Posterior vena cava (tissue), 2 donors: ENCODE measurements at regions of chr2 and their contacts with region 1.

Region 1: DNA sequence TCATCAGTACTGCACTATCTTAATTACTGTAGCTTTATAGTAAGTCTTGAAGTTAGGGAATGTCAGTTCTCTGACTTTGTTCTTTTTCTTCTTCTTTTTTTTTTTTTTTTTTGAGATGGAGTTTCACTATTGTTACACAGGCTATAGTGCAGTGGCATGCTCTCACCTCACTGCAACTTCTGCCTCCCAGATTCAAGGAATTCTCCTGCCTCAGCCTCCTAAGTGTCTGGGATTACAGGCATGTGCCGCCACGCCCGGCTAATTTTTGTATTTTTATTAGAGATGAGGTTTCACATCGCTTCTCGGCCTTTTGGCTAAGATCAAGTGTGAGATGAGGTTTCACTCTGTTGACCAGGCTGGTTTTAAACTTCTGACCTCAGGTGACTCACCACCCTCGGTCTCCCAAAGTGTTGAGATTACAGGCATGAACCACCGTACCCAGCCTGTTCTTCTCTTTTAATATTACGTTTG is 41.9 kb upstream of the TANC1 start:
- DNase-seq: no peak

Region 2: GRCh38 chr2:158414538-158414937 is 512.0 kb before region 1 on chr2:
- intact Hi-C with region 1: loop called in 1 of 2 experiments (anchors 5 kb)
- DNase-seq: no peak

Region 3: GRCh38 chr2:159106109-159106508 is 179.6 kb after region 1 on chr2:
- intact Hi-C with region 1: loop called in 1 of 2 experiments (anchors 2 kb)
- DNase-seq: no peak